Activated CD4-positive, alpha-beta memory T cell treated with anti-CD3 and anti-CD28 coated beads, Interleukin-2, amount 10 ng/mL, durations not matched to agents 7 days and 5 days (primary cell): ENCODE measurements at regions of chr14 and their contacts with region 1.

Region 1: GRCh38 chr14:105369653-105370040 is 28.7 kb upstream of the TEX22 start:
- DNase-seq: no peak
- H3K4me3 Mint-ChIP-seq: no peak overlapping the region
- H3K27ac Mint-ChIP-seq: no peak overlapping the region
- H3K4me1 Mint-ChIP-seq: peaks cover 11% of the 10 kb centered on the region
- H3K27me3 Mint-ChIP-seq: no peaks in the 10 kb centered on the region

Region 2: DNA sequence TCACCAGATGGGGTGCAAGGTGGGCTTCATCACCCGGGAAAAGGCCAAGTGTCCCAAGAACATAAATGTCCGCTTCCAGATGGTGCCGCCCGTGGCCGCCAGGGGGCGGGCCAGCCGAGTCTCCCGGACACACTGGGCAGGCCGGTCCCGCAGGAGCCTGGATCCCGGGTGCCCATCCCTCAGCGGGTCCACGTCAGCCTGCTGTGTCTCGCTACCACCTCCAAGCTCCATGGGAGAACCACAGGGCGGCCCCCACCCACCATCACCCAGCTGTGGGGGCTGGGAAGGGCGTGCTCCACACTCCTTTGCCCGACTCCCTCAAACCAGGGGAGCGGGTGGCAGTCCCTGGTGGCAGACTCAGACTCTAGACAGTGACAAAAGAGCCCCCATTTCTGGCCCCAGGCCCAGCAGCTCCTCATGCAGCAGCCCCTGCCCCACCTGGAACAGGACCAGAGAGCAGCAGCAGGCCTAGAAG is 166.6 kb before region 1 on chr14:
- CTCF ChIA-PET with region 1: no interaction called
- POLR2A ChIA-PET with region 1: no interaction called
- DNase-seq: peak; percentile 67
- H3K4me3 Mint-ChIP-seq: no peak overlapping the region
- H3K27ac Mint-ChIP-seq: no peak overlapping the region
- H3K4me1 Mint-ChIP-seq: peaks cover 12% of the 10 kb centered on the region
- H3K27me3 Mint-ChIP-seq: peaks cover 11% of the 10 kb centered on the region

Region 3: GRCh38 chr14:105275267-105275946 is 94.2 kb before region 1 on chr14:
- CTCF ChIA-PET with region 1: no interaction called
- POLR2A ChIA-PET with region 1: no interaction called
- DNase-seq: no peak
- H3K4me3 Mint-ChIP-seq: no peak overlapping the region
- H3K27ac Mint-ChIP-seq: no peak overlapping the region
- H3K4me1 Mint-ChIP-seq: no peaks in the 10 kb centered on the region
- H3K27me3 Mint-ChIP-seq: no peaks in the 10 kb centered on the region

Region 4: GRCh38 chr14:105527661-105528581 is 158.3 kb after region 1 on chr14:
- CTCF ChIA-PET with region 1: interaction called, 20 read pairs
- POLR2A ChIA-PET with region 1: interaction called, 3 read pairs
- DNase-seq: peak; percentile 84
- H3K4me3 Mint-ChIP-seq: peak overlapping the region; percentile 68
- H3K27ac Mint-ChIP-seq: no peak overlapping the region
- H3K4me1 Mint-ChIP-seq: peaks cover 39% of the 10 kb centered on the region
- H3K27me3 Mint-ChIP-seq: peaks cover 24% of the 10 kb centered on the region